Calu3 (cell line): ENCODE measurements at regions of chr7 and their contacts with region 1.

Region 1: GRCh38 chr7:26667500-26668133 is 196.8 kb downstream of the SKAP2 start:
- DNase-seq: peak; percentile 92
- H3K4me3 Mint-ChIP-seq: no peak overlapping the region
- H3K27ac Mint-ChIP-seq: peak overlapping the region; percentile 63
- H3K4me1 Mint-ChIP-seq: peaks cover 57% of the 10 kb centered on the region
- H3K27me3 Mint-ChIP-seq: no peaks in the 10 kb centered on the region
- CTCF ChIP-seq: peak; percentile 96

Region 2: DNA sequence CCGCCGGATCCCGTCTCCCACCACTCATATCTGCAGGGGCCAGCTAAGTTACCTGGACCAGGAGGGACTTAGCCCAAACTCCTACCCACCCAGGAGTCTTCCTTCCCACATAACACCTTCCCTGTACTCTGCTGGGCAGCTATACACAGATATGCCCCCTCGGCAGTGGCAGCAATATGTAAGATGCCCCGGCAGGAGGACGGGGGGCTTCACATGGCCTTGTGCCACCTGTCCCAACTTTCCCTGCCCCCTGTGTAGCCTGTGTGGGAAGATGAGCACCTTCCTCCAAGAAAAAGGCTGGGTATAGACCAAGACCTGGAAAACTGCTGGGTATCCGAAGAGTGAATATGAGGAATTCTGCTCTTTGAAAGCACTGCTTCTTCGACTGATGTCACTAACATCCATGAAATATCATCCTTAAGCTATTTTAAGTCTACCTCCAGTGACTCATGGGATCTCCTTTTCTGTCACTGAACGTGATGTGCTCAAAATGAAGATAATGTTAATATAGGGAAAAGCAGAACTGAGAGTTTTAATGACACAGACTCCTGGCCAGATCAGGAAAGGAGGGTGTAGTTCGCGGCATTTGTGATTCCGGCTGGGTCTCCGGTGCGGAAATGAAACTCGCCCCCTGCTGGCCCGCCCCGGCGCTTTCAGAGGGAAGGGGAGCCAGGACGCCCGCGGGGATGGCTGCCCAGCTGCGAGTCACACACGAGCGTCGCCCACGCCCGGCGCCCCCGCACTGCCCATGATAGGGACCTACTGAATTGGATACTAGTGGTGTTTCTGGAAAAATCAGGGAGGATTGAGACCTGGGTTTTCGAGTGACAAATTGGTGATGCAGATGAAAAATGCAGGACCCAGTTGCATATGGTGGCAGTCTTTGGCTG is 772.5 kb before region 1 on chr7:
- CTCF ChIA-PET with region 1: interaction called, 9 read pairs
- intact Hi-C with region 1: loop called (anchors 2 kb)
- DNase-seq: peak; percentile 91
- H3K4me3 Mint-ChIP-seq: peak overlapping the region; percentile 62
- H3K27ac Mint-ChIP-seq: no peak overlapping the region
- H3K4me1 Mint-ChIP-seq: peaks cover 30% of the 10 kb centered on the region
- H3K27me3 Mint-ChIP-seq: peaks cover 21% of the 10 kb centered on the region
- CTCF ChIP-seq: peak; percentile 93

Region 3: DNA sequence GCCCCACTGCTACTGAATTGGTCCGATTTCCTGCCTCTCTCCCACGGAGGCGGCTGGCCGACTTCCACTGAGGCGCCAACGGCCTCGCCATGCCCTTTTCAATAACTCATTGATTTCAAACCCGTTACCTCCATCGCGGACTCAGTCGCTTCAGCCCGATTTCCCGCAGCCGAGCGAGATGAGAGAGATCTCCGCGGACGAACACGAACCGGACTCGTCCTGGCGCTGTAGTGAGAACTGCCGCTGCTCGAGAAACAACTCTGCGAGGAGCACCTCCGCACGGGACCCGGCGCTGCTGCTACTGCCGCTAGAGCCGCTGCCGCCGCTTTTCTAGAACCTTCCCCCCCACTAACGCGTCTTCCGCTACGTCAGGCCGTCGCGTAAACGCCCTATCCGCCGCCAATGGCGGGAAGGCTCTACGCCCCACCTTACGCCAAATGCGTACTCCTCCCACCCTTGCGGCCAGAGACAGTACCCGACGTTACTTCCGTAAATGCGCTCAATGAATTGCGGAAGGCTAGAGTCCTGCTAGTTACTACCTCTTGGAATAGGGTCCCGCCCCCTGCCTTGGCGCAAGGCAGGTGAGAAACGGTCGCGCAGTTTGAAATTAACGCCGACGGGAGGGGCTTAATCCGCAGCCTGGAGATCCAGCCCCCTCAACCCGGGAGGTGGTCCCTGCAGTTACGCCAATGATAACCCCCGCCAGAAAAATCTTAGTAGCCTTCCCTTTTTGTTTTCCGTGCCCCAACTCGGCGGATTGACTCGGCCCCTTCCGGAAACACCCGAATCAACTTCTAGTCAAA is 467.0 kb before region 1 on chr7 and contains the start of gene HNRNPA2B1:
- CTCF ChIA-PET with region 1: no interaction called
- intact Hi-C with region 1: loop called (anchors 1 kb)
- DNase-seq: peak; percentile 99
- H3K4me3 Mint-ChIP-seq: peak within 1 kb of the TSS; percentile 96
- H3K27ac Mint-ChIP-seq: peak within 1 kb of the TSS; percentile 99
- H3K4me1 Mint-ChIP-seq: peaks cover 37% of the 10 kb centered on the region
- H3K27me3 Mint-ChIP-seq: no peaks in the 10 kb centered on the region
- CTCF ChIP-seq: no peak
- total RNA-seq, gene HNRNPA2B1: 880 and 924 TPM in 2 replicates

Region 4: DNA sequence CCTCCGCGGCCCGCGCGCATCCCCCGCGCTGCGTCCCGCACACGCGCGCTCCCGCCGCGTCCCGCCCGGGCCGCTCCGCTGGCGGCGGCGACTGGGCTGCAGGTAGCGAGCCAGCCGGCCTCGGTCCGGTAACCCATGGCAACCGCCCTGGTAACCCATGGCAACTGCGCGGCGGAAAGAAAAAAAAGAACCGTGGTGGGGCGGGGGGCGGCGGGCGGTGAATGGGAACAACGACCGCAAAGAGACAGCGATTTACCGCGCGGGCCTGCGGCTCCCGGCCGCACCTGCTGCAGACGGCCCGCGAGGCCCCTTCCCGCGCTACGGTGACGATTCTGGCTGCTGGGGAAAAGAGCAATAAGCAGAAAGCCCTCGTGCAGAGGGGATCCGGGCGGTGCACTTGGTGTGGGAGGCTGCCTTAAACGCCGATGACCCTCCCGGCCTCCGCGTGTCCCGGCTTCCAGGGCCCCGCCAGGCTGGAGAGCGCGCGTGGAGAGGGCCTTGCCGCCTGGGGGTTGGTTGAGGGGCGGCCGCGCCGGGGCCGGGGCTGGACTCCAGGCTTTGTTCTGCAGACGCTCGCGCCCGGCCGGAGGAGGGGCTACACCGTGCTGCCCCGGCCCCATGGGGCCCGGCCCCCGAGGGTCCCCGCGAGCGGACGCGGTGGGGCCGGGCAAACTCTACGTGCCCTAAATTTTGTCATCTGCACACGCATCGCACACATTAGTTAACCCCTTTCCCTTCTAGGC is 291.3 kb before region 1 on chr7:
- CTCF ChIA-PET with region 1: interaction called, 20 read pairs
- intact Hi-C with region 1: loop called (anchors 2 kb)
- DNase-seq: peak; percentile 84
- H3K4me3 Mint-ChIP-seq: peak overlapping the region; percentile 90
- H3K27ac Mint-ChIP-seq: peak overlapping the region; percentile 64
- H3K4me1 Mint-ChIP-seq: peaks cover 6% of the 10 kb centered on the region
- H3K27me3 Mint-ChIP-seq: no peaks in the 10 kb centered on the region
- CTCF ChIP-seq: no peak

Region 5: GRCh38 chr7:26508481-26508880 is 159.1 kb before region 1 on chr7:
- CTCF ChIA-PET with region 1: interaction called, 5 read pairs
- intact Hi-C with region 1: loop called (anchors 2 kb)
- DNase-seq: peak; percentile 92
- H3K4me3 Mint-ChIP-seq: peak overlapping the region; percentile 75
- H3K27ac Mint-ChIP-seq: peak overlapping the region; percentile 96
- H3K4me1 Mint-ChIP-seq: peaks cover 26% of the 10 kb centered on the region
- H3K27me3 Mint-ChIP-seq: no peaks in the 10 kb centered on the region
- CTCF ChIP-seq: no peak